ENCODE measurements at regions of chr2 and their contacts with region 1.

Region 1: GRCh38 chr2:226799181-226799975 is at the start of gene IRS1:
- DNase-seq: peak; percentile 32 to 84 (median 68)
- ATAC-seq: peak; percentile 65
- H3K4me3 ChIP-seq: peak within 1 kb of the TSS; percentile 70 to 90
- H3K4me3 Mint-ChIP-seq: peak within 1 kb of the TSS; percentile 92
- H3K27ac ChIP-seq: peak within 1 kb of the TSS; percentile 43 to 51
- H3K27ac Mint-ChIP-seq: peak within 1 kb of the TSS; percentile 53
- H3K4me1 ChIP-seq: peaks cover 26% of the 10 kb centered on the region
- H3K4me1 Mint-ChIP-seq: peaks cover 39% of the 10 kb centered on the region
- H3K27me3 ChIP-seq: peaks cover 0 to 4% of the 10 kb centered on the region in 2 experiments
- H3K27me3 Mint-ChIP-seq: peaks cover 2% of the 10 kb centered on the region
- CTCF ChIP-seq: peak; percentile 17
- total RNA-seq, gene IRS1: 5.6 to 5.9 TPM

Region 2: GRCh38 chr2:226023383-226023782 is 776.0 kb before region 1 on chr2:
- CTCF ChIA-PET with region 1: no interaction called
- POLR2A ChIA-PET with region 1: no interaction called
- intact Hi-C with region 1: loop called in 1 of 2 experiments (anchors 10 kb)
- DNase-seq: no peak
- ATAC-seq: no peak
- H3K4me3 ChIP-seq: no peak overlapping the region
- H3K4me3 Mint-ChIP-seq: no peak overlapping the region
- H3K27ac ChIP-seq: no peak overlapping the region
- H3K27ac Mint-ChIP-seq: no peak overlapping the region
- H3K4me1 ChIP-seq: no peaks in the 10 kb centered on the region
- H3K4me1 Mint-ChIP-seq: no peaks in the 10 kb centered on the region
- H3K27me3 ChIP-seq: no peaks in the 10 kb centered on the region
- H3K27me3 Mint-ChIP-seq: peaks cover 5% of the 10 kb centered on the region
- CTCF ChIP-seq: no peak

Region 3: DNA sequence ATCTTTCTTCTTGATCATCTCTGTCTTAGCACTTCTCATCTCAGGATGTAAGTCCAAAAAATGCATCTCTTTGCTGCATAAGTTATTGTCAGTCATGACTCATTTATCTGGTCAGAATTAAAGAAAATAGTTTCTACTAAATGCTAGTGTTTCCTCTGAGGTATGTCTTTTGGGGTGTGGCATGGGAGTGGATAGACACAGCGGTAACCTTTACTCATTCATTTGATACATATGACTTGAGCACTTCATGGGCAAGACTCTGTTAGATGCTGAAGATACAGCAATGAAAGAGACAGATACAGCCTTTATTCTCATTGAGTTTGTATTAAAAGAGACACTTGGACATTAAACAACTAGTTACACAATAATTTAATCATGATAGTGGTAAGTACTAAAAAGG is 284.4 kb before region 1 on chr2:
- CTCF ChIA-PET with region 1: no interaction called
- POLR2A ChIA-PET with region 1: no interaction called
- intact Hi-C with region 1: loop called in 1 of 2 experiments (anchors 10 kb)
- DNase-seq: no peak
- ATAC-seq: no peak
- H3K4me3 ChIP-seq: no peak overlapping the region
- H3K4me3 Mint-ChIP-seq: no peak overlapping the region
- H3K27ac ChIP-seq: no peak overlapping the region
- H3K27ac Mint-ChIP-seq: no peak overlapping the region
- H3K4me1 ChIP-seq: no peaks in the 10 kb centered on the region
- H3K4me1 Mint-ChIP-seq: no peaks in the 10 kb centered on the region
- H3K27me3 ChIP-seq: no peaks in the 10 kb centered on the region
- H3K27me3 Mint-ChIP-seq: peaks cover 5% of the 10 kb centered on the region
- CTCF ChIP-seq: no peak

Region 4: DNA sequence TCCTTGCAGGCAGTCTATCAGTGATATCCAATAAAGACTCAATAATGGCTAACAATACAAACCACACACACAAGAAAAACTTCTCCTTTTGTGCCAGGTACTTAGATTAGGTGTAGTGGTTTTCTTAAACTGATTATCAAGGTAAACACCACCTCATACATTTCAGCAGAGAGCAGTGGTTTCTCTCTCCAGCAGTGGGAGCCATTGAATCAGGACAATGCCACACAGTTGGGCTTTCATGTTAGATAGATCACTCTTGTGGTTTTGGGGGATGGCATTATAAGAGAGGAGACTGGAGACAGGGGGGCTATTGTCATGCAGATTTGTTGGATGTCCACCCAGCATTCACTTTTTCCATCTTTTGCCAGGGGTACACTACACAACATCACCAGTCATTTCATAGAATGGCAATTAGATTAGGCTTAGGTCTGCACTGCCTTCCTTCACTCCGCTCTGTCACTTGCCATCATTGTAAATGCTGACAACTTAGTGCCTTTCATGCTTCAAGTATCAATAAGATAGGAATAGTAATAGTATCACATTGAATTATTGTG is 13.8 kb after region 1 on chr2:
- CTCF ChIA-PET with region 1: interaction called, 26 read pairs
- POLR2A ChIA-PET with region 1: no interaction called
- intact Hi-C with region 1: no loop called
- DNase-seq: peak in 2 of 9 experiments; percentile 10 to 21
- ATAC-seq: peak; percentile 31
- H3K4me3 ChIP-seq: no peak overlapping the region
- H3K4me3 Mint-ChIP-seq: no peak overlapping the region
- H3K27ac ChIP-seq: no peak overlapping the region
- H3K27ac Mint-ChIP-seq: no peak overlapping the region
- H3K4me1 ChIP-seq: no peaks in the 10 kb centered on the region
- H3K4me1 Mint-ChIP-seq: no peaks in the 10 kb centered on the region
- H3K27me3 ChIP-seq: peaks cover 0 to 7% of the 10 kb centered on the region in 2 experiments
- H3K27me3 Mint-ChIP-seq: peaks cover 37% of the 10 kb centered on the region
- CTCF ChIP-seq: no peak

Region 5: GRCh38 chr2:226943862-226944620 is 144.7 kb after region 1 on chr2:
- CTCF ChIA-PET with region 1: no interaction called
- POLR2A ChIA-PET with region 1: no interaction called
- intact Hi-C with region 1: no loop called
- DNase-seq: no peak
- ATAC-seq: no peak
- H3K4me3 ChIP-seq: no peak overlapping the region
- H3K4me3 Mint-ChIP-seq: no peak overlapping the region
- H3K27ac ChIP-seq: no peak overlapping the region
- H3K27ac Mint-ChIP-seq: no peak overlapping the region
- H3K4me1 ChIP-seq: no peaks in the 10 kb centered on the region
- H3K4me1 Mint-ChIP-seq: no peaks in the 10 kb centered on the region
- H3K27me3 ChIP-seq: no peaks in the 10 kb centered on the region
- H3K27me3 Mint-ChIP-seq: no peaks in the 10 kb centered on the region
- CTCF ChIP-seq: no peak

Region 6: DNA sequence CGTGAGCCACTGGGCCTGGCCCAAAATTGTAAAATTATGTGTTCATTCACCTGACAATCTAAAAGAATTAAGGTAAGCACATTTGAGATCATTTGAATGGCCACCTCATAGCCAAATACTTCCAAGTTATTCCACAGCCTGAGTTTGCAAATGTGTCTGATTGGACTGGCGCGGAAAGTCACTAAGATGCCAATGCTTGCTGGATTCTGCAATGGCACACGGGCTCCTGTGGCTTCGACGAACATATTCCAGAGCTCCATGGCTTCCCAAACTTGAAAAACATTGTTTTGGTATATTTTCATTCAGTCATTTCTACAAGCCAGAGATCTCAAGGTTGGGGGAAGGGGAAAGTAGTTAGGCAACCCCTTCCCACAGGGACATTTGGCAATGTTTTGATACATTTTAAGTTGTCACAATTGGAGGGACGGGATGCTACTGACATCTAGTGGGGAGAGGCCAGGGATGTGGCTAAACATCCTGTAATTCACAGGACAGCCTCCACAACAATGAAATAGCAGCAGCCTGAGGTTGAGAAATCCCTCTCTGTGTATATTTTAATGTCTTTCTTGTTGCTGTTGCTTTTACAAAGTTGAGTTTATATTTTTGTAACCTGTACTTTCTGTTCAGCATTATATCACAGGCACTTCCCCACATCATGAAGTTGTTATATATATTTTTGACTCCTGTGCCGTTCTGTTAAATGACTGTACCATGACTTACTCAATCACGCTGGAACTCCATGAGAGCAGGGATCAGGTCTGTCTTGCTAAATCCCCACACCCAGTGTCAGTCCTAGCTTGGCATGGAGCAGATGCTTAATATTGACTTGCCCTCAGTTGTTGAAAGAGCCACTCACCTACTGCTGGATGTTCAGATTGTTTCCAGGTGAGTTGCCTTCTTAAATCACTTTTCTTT is 307.7 kb after region 1 on chr2:
- CTCF ChIA-PET with region 1: no interaction called
- POLR2A ChIA-PET with region 1: no interaction called
- intact Hi-C with region 1: loop called in 1 of 2 experiments (anchors 2 kb)
- DNase-seq: peak in 4 of 9 experiments; percentile 14 to 43 (median 24)
- ATAC-seq: no peak
- H3K4me3 ChIP-seq: no peak overlapping the region
- H3K4me3 Mint-ChIP-seq: no peak overlapping the region
- H3K27ac ChIP-seq: no peak overlapping the region
- H3K27ac Mint-ChIP-seq: no peak overlapping the region
- H3K4me1 ChIP-seq: no peaks in the 10 kb centered on the region
- H3K4me1 Mint-ChIP-seq: no peaks in the 10 kb centered on the region
- H3K27me3 ChIP-seq: no peaks in the 10 kb centered on the region
- H3K27me3 Mint-ChIP-seq: peaks cover 5% of the 10 kb centered on the region
- CTCF ChIP-seq: peak; percentile 40

Measured in CD8-positive, alpha-beta T cell (primary cell).